Ascending aorta (tissue), 2 donors: ENCODE measurements at regions of chr19 and their contacts with region 1.

Region 1: DNA sequence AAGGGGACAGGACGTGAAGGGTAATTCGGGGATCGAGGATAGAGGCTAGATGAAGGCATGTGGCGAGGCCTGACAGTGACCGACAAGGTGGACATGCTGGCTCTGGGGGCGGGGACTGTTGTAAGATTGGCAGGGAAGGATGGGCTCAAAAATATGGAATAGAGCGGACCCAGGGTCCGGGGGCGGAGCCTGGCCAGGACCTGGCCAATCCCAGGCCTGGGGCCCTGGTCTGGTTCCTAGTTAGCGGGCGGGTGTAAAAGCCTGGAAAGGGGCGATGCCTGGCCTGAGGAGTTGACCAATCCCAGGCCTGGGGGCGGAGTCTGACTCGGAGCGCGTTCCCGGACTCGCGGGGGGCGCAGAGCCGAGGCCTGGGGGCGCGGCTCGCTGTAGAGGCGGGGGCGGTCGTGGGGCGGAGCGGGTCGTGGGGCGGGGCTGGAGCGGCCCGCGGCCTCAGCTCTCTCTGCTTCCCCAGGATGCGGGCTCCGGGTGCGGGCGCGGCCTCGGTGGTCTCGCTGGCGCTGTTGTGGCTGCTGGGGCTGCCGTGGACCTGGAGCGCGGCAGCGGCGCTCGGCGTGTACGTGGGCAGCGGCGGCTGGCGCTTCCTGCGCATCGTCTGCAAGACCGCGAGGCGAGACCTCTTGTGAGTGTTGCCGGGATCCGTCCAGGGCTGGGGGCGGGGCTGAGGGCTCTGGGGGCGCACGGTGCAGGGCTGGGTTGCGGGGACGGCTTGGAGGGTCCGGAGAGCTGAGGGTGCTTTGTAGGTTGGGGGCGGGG is at the start of gene SLC27A1:
- DNase-seq: peak; percentile 98 to 100
- H3K4me3 ChIP-seq: peak within 1 kb of the TSS; percentile 87 to 89
- H3K27ac ChIP-seq: peak within 1 kb of the TSS; percentile 80 to 91
- H3K4me1 ChIP-seq: peaks cover 13 to 18% of the 10 kb centered on the region in 2 donors
- H3K27me3 ChIP-seq: no peaks in the 10 kb centered on the region
- CTCF ChIP-seq: no peak
- total RNA-seq, gene SLC27A1: 64.9 TPM

Region 2: GRCh38 chr19:17075035-17075863 is 395.0 kb before region 1 on chr19 and contains the starts of genes HAUS8 and MYO9B:
- intact Hi-C with region 1: loop called (anchors 5 kb)
- DNase-seq: peak; percentile 96 to 100
- H3K4me3 ChIP-seq: peak within 1 kb of the TSS; percentile 91 to 97
- H3K27ac ChIP-seq: peak within 1 kb of the TSS; percentile 94 to 98
- H3K4me1 ChIP-seq: peaks cover 5 to 29% of the 10 kb centered on the region in 2 donors
- H3K27me3 ChIP-seq: no peaks in the 10 kb centered on the region
- CTCF ChIP-seq: no peak
- total RNA-seq, gene HAUS8: 4.3 TPM
- total RNA-seq, gene MYO9B: 182 TPM

Region 3: DNA sequence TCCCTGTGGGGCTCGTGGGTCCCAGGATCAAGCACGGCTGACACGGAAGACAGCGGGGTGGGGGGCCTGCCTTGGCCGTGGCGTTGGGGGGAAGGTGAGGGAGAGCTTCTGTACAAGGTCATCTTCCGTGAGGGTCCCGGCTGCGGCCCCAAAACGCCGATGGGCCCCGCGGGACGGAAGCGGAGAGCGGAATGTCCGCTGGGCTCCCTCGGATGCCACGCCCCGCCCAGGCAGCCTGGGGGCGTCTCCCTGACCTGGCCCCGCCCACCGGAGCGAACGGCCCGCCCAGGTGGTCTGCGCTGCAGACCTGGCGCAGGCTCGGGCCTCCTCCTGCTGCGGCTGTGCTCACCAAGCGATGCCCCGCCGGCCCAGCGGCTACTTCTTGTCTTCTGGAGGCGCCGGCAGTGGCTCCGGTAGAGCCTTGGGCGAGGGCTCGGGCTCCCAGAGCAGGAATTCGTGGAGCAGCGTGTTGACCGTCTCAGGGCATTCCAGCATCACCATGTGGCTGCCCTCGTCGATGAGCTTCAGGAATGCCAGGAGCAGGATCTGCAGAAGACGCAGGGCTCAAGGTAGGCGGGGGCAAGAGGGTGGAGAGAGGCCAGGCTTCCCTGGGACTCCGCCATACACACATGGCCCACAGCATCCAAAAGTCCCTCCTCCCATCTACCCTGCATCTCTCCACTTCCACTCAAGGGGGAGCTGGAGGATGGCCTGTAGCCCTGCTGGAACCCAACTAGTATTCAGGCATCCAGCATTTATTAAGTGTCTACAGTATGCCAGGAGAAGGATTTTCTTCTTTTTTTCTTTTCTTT is 177.8 kb before region 1 on chr19:
- intact Hi-C with region 1: loop called (anchors 5 kb)
- DNase-seq: peak; percentile 41 to 86
- H3K4me3 ChIP-seq: peak overlapping the region; percentile 50 to 66
- H3K27ac ChIP-seq: peak overlapping the region; percentile 69 to 73
- H3K4me1 ChIP-seq: peaks cover 3 to 10% of the 10 kb centered on the region in 2 donors
- H3K27me3 ChIP-seq: no peaks in the 10 kb centered on the region
- CTCF ChIP-seq: peak; percentile 71 to 83 (median 82)

Region 4: GRCh38 chr19:17346109-17346671 is 124.1 kb before region 1 on chr19:
- intact Hi-C with region 1: loop called (anchors 2 kb)
- DNase-seq: peak in 1 of 2 donors; percentile 88
- H3K4me3 ChIP-seq: no peak overlapping the region
- H3K27ac ChIP-seq: peak overlapping the region; percentile 87 to 90
- H3K4me1 ChIP-seq: peaks cover 5 to 32% of the 10 kb centered on the region in 2 donors
- H3K27me3 ChIP-seq: no peaks in the 10 kb centered on the region
- CTCF ChIP-seq: peak; percentile 93 to 96 (median 96)

Region 5: DNA sequence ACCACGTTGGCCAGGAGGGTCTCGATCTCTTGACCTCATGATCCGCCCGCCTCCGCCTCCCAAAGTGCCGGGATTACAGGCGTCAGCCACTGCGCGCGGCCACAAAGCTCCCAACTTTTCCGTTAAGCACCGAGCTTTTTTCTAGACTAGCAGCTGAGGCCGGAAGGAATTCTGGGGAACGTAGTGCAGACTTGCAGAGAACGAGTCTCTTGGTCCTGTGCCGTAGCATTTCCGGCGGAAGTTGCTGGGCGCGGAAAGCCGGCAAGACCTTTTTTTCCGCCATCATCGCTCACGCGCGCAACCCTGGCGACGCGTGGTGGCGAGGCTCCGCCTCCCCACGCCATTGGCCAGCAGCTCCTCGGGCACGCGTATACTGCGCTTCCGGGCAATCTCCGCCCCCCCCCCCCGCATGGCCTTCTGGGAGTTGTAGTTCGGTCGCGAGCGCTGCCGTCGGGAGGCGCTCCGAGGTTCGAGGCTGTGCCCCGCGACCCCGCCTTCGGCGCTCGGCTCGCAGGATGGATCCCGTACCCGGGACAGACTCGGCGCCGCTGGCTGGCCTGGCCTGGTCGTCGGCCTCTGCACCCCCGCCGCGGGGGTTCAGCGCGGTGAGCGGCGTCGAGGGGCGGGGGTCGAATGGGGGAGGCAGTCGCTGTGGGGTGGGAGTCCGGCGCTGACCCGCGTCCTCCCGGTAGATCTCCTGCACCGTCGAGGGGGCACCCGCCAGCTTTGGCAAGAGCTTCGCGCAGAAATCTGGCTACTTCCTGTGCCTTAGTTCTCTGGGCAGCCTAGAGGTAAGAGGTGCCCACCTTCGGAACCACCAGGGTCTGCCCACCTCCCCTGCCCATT is 50.4 kb before region 1 on chr19 and contains the start of gene MVB12A:
- intact Hi-C with region 1: loop called (anchors 2 kb)
- DNase-seq: peak; percentile 91 to 98
- H3K4me3 ChIP-seq: peak within 1 kb of the TSS; percentile 62 to 85
- H3K27ac ChIP-seq: peak within 1 kb of the TSS; percentile 28 to 78
- H3K4me1 ChIP-seq: peaks cover 5 to 6% of the 10 kb centered on the region in 2 donors
- H3K27me3 ChIP-seq: no peaks in the 10 kb centered on the region
- CTCF ChIP-seq: no peak
- total RNA-seq, gene MVB12A: 49.6 TPM

Region 6: GRCh38 chr19:17555480-17555928 is 85.2 kb after region 1 on chr19 and contains the start of gene COLGALT1:
- intact Hi-C with region 1: loop called (anchors 2 kb)
- DNase-seq: peak; percentile 95 to 99
- H3K4me3 ChIP-seq: peak within 1 kb of the TSS; percentile 93 to 96
- H3K27ac ChIP-seq: peak within 1 kb of the TSS; percentile 57 to 60
- H3K4me1 ChIP-seq: peaks cover 0 to 9% of the 10 kb centered on the region in 2 donors
- H3K27me3 ChIP-seq: no peaks in the 10 kb centered on the region
- CTCF ChIP-seq: peak in 1 of 3 experiments; percentile 24
- total RNA-seq, gene COLGALT1: 95.4 TPM